Cardiac septum (tissue), 1 donor: ENCODE measurements at regions of chr4 and their contacts with region 1.

Region 1: GRCh38 chr4:42605264-42605663 is 51.6 kb downstream of the ATP8A1 start:
- DNase-seq: no peak

Region 2: GRCh38 chr4:42643685-42644084 is 38.4 kb after region 1 on chr4:
- intact Hi-C with region 1: loop called (anchors 5 kb)
- DNase-seq: no peak

Region 3: DNA sequence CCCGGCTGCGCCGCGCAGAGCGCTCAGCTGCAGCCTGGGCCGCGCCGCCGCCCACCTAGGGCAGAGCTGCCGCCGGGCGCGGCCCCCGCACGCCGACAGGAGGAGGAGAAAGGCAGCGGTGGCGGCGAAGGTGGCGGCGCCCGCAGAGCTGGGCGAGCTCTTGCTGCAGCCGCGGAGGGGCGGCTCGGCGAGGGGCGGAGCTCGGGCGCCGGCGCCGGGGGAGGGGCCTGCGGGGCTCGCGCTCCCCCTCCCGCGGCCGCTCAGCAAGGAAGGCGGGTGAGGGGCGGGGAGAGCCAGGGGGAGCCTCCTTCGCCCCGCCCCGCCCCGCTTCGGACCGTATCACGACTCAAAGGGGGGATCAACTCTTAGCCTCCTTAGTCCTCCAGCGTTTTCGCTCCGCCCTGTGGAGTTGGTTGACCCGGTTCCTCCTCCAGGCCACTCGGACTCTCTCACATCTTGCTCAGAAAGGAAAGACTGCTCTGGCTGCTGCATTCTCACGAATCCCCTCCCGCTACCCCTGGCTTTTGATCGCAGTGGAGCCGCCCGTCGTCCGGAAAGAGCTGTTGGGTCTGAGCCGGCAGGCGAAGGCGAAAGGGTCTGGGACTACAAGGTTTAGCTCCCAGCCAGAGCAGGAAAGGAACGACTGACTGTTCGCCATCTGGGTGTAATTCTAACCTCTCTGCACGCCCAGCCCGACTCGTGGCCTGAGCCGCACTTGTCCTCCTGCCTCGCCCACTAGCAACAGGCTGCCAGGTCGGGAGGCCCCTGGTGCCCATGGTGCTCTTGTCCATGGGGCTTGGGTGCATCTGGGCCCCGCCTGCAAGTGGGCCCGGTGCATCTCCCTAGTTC is 51.9 kb after region 1 on chr4 and contains the start of gene ATP8A1:
- intact Hi-C with region 1: loop called (anchors 2 kb)
- DNase-seq: peak; percentile 96
- total RNA-seq, gene ATP8A1: 22.1 TPM